ENCODE measurements at regions of chr11 and their contacts with region 1.

Region 1: DNA sequence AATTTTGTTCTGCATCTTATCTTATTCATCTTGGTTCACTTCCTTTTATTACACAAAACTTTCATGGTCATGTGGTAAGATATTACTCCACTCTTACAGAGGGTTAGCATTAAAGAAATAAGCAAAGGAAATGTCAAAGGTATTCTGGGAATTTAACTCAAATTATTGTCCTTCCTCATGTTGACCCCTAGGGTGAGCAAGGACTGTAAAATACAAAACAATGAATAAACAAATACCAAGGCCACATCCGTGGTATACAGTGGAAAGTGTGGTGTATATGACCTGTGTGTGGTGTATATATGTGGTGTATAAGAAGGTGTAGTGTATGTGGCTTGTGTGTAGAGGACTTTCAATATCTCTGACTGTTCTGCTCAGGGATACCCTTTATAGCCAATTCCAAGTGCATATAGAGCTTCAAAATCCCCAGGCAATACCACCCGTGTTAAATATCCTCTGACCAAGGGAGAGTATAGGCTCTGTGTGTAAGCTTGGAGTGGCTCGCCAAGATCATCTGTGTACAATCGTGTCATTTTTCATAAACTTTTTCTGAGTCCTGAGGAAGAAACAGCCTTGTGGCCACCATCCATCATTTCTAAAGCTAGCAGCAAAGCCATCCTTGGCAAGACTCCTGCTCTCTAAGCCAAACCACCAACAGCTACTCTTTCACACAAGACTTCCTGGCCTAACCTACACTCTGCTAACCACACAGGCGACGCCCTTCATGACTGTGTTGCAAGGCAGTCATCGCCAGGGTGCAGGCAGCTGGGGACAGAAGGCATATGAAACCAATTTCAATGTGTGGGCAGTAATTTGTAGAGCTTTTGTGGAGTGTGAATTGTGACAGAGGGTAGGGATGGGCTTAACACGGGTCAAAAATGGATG is 548.0 kb downstream of the ETS1 start:
- DNase-seq: peak; percentile 80
- H3K4me3 Mint-ChIP-seq: peak overlapping the region; percentile 35
- H3K27ac Mint-ChIP-seq: peak overlapping the region; percentile 91
- H3K4me1 Mint-ChIP-seq: peaks cover 46% of the 10 kb centered on the region
- H3K27me3 Mint-ChIP-seq: no peaks in the 10 kb centered on the region

Region 2: GRCh38 chr11:128052912-128053641 is 13.7 kb after region 1 on chr11:
- intact Hi-C with region 1: loop called (anchors 1 kb)
- DNase-seq: no peak
- H3K4me3 Mint-ChIP-seq: peak overlapping the region; percentile 48
- H3K27ac Mint-ChIP-seq: peak overlapping the region; percentile 76
- H3K4me1 Mint-ChIP-seq: peaks cover 56% of the 10 kb centered on the region
- H3K27me3 Mint-ChIP-seq: no peaks in the 10 kb centered on the region

Region 3: DNA sequence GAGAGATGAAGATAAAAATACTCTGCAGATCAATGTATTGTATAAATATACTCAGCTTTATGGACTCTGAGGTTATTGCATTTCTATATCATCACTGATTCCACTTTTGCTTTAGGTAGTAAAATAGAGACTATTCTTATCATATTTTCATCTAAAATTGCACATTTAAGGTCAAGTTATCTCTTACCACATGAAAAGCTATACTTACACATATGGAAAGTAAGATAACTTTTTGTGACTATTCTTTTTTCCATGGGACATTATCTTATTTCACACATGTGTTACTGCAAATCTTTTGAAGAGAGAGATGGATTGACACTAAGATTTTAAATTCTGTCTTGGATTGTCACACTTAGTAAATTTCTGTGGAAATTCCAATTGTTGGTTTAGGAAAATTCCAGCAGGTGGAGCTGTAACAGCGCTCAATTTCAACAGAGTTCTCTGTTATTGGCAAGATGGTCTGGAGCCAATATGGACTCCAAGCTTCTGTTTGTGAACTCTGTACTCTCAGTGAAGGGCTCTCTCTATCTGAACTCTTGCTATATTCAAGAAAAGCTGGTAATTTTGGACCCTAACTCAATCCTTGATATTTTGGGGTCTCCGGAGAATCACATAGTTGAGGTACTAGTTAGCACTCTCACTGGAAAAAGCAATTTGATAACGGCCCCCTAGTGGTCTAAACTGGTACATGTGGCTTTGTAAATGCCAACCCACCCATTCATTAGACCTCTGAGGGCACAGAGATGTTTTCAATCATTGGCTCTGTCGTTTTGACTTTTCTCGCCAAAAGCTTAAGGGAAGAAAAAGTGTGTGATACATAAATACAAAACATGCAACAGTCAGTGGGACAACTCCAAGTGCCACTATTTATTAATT is 118.3 kb after region 1 on chr11:
- intact Hi-C with region 1: loop called (anchors 1 kb)
- DNase-seq: peak; percentile 39
- H3K4me3 Mint-ChIP-seq: no peak overlapping the region
- H3K27ac Mint-ChIP-seq: peak overlapping the region; percentile 81
- H3K4me1 Mint-ChIP-seq: peaks cover 26% of the 10 kb centered on the region
- H3K27me3 Mint-ChIP-seq: no peaks in the 10 kb centered on the region

Region 4: DNA sequence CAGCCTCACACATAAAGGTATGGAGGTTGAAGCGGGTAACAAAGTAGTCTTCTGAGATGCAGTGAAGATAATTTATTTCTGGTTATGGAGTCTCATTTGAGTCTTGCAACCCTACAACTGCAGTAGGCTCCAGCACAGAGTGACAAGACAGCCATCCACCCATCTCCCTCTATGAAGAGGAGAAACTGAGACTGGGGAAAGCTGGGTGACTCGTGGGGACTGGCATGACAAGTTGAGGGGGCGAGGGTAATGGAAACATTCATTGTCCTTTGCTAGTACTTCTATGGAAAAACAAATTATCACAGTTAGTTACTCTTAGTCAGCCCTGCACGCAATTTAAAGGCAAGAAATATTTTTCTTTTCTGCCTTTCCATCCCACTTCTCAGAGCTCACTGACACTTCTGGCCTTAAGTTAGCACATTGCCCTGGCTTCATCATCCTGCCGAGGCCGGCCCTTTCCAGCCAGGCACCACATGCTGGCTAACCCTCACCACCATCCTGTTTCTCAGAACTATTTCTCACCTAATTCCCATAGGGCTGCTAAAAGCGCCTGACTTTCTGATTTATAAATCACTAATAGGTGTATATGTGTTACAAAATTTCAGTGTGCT is 186.8 kb after region 1 on chr11:
- intact Hi-C with region 1: loop called (anchors 1 kb)
- DNase-seq: no peak
- H3K4me3 Mint-ChIP-seq: peak overlapping the region; percentile 53
- H3K27ac Mint-ChIP-seq: peak overlapping the region; percentile 97
- H3K4me1 Mint-ChIP-seq: peaks cover 49% of the 10 kb centered on the region
- H3K27me3 Mint-ChIP-seq: no peaks in the 10 kb centered on the region

Region 5: GRCh38 chr11:128733440-128734102 is 694.2 kb after region 1 on chr11:
- intact Hi-C with region 1: loop called (anchors 10 kb)
- DNase-seq: no peak
- H3K4me3 Mint-ChIP-seq: peak overlapping the region; percentile 72
- H3K27ac Mint-ChIP-seq: peak overlapping the region; percentile 90
- H3K4me1 Mint-ChIP-seq: peaks cover 87% of the 10 kb centered on the region
- H3K27me3 Mint-ChIP-seq: no peaks in the 10 kb centered on the region

Region 6: GRCh38 chr11:128848815-128849455 is 809.6 kb after region 1 on chr11:
- intact Hi-C with region 1: loop called (anchors 5 kb)
- DNase-seq: peak; percentile 26
- H3K4me3 Mint-ChIP-seq: no peak overlapping the region
- H3K27ac Mint-ChIP-seq: no peak overlapping the region
- H3K4me1 Mint-ChIP-seq: peaks cover 11% of the 10 kb centered on the region
- H3K27me3 Mint-ChIP-seq: no peaks in the 10 kb centered on the region

Region 7: DNA sequence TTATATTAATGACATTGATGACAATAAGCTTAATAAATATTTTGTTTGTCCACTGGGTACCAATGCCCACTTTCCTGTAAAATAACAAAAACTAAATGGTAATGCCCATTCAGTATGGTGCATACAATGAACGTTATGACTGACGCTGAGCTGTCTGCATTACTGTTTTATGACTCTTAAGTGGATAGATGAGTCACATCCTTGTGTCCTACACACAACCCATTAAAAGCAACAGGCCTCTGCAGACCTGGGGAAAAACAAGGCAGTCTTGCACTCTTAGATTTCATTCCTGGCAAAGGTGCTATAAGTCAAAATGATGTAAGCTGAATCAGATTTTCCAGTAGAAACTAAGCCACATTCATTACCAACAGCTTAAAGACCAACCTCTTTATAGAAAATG is 1599.9 kb after region 1 on chr11:
- intact Hi-C with region 1: loop called (anchors 5 kb)
- DNase-seq: no peak
- H3K4me3 Mint-ChIP-seq: no peak overlapping the region
- H3K27ac Mint-ChIP-seq: peak overlapping the region; percentile 85
- H3K4me1 Mint-ChIP-seq: peaks cover 68% of the 10 kb centered on the region
- H3K27me3 Mint-ChIP-seq: no peaks in the 10 kb centered on the region